ENCODE measurements at regions of chr18 and their contacts with region 1.

Region 1: DNA sequence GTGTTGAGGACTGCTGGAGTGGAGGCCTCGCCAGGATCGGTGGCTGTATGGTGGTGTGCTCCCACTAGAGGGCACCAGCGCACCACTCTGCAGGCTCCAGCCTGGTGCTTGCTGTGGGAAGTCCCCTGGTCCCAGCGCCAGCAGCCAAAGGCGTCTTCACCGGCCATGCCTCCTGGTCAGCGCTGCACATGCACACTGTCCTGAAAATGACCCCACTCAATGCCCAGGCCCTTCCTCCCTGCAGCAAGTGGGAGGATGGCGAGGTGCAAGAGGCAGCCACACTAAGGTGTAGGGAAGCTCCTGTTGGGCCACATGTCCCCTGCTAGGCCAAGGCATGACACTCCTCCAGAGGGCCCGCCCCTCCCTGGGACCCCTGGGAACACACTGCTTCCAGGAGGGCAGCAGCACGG is 136.5 kb downstream of the CTIF start:
- DNase-seq: peak; percentile 51
- ATAC-seq: peak; percentile 98
- H3K4me3 ChIP-seq: no peak overlapping the region
- H3K27ac ChIP-seq: no peak overlapping the region
- H3K4me1 ChIP-seq: peaks cover 8% of the 10 kb centered on the region
- H3K27me3 ChIP-seq: no peaks in the 10 kb centered on the region
- CTCF ChIP-seq: peak; percentile 91 to 99 (median 97); a peak in 5 of 6 replicates
- EP300 ChIP-seq: 0 out of 4 replicates have a peak, but pooled peaks of 1 of the 2 experiments have one; percentile 30
- POLR2A ChIP-seq: no peak
- RAD21 ChIP-seq: peak; percentile 86

Region 2: GRCh38 chr18:48851599-48851960 is 176.2 kb after region 1 on chr18:
- CTCF ChIA-PET with region 1: no interaction called
- POLR2A ChIA-PET with region 1: no interaction called
- RAD21 ChIA-PET with region 1: no interaction called
- SMC1A ChIA-PET with region 1: no interaction called
- in situ Hi-C with region 1: no loop called
- intact Hi-C with region 1: no loop called
- DNase-seq: no peak
- ATAC-seq: no peak
- H3K4me3 ChIP-seq: no peak overlapping the region
- H3K27ac ChIP-seq: no peak overlapping the region
- H3K4me1 ChIP-seq: peaks cover 2% of the 10 kb centered on the region; the same call in 1 of the 2 replicates
- H3K27me3 ChIP-seq: no peaks in the 10 kb centered on the region
- CTCF ChIP-seq: no peak
- EP300 ChIP-seq: no peak
- POLR2A ChIP-seq: no peak
- RAD21 ChIP-seq: no peak

Region 3: GRCh38 chr18:48896690-48897511 is 221.5 kb after region 1 on chr18:
- CTCF ChIA-PET with region 1: no interaction called
- POLR2A ChIA-PET with region 1: no interaction called
- RAD21 ChIA-PET with region 1: no interaction called
- SMC1A ChIA-PET with region 1: no interaction called
- in situ Hi-C with region 1: no loop called
- intact Hi-C with region 1: no loop called
- DNase-seq: peak; percentile 19
- ATAC-seq: peak; percentile 92
- H3K4me3 ChIP-seq: no peak overlapping the region
- H3K27ac ChIP-seq: peak overlapping the region; percentile 34; the same call in 1 of the 2 replicates
- H3K4me1 ChIP-seq: peaks cover 13% of the 10 kb centered on the region
- H3K27me3 ChIP-seq: no peaks in the 10 kb centered on the region
- CTCF ChIP-seq: peak in 2 of 3 experiments; percentile 14 to 25; a peak in 2 of 6 replicates
- EP300 ChIP-seq: 0 out of 4 replicates have a peak, but pooled peaks of 1 of the 2 experiments have one; percentile 6
- POLR2A ChIP-seq: no peak
- RAD21 ChIP-seq: peak; percentile 34; the same call in 1 of the 2 replicates

Region 4: GRCh38 chr18:48913201-48913600 is 237.8 kb after region 1 on chr18:
- CTCF ChIA-PET with region 1: no interaction called
- POLR2A ChIA-PET with region 1: no interaction called
- RAD21 ChIA-PET with region 1: interaction called, 3 read pairs
- SMC1A ChIA-PET with region 1: no interaction called
- in situ Hi-C with region 1: no loop called
- intact Hi-C with region 1: loop called (anchors 10 kb)
- DNase-seq: no peak
- ATAC-seq: peak; percentile 79
- H3K4me3 ChIP-seq: no peak overlapping the region
- H3K27ac ChIP-seq: no peak overlapping the region
- H3K4me1 ChIP-seq: peaks cover 10% of the 10 kb centered on the region
- H3K27me3 ChIP-seq: no peaks in the 10 kb centered on the region
- CTCF ChIP-seq: peak; percentile 38 to 51 (median 43); a peak in 5 of 6 replicates
- EP300 ChIP-seq: no peak
- POLR2A ChIP-seq: no peak
- RAD21 ChIP-seq: peak; percentile 34; the same call in 1 of the 2 replicates

Region 5: GRCh38 chr18:49041435-49042245 is 366.3 kb after region 1 on chr18:
- CTCF ChIA-PET with region 1: interaction called, 10 read pairs
- POLR2A ChIA-PET with region 1: no interaction called
- RAD21 ChIA-PET with region 1: no interaction called
- SMC1A ChIA-PET with region 1: no interaction called
- in situ Hi-C with region 1: no loop called
- intact Hi-C with region 1: loop called (anchors 5 kb)
- DNase-seq: no peak
- ATAC-seq: peak; percentile 75
- H3K4me3 ChIP-seq: no peak overlapping the region
- H3K27ac ChIP-seq: no peak overlapping the region
- H3K4me1 ChIP-seq: no peaks in the 10 kb centered on the region
- H3K27me3 ChIP-seq: no peaks in the 10 kb centered on the region
- CTCF ChIP-seq: peak; percentile 49 to 56 (median 53); a peak in 5 of 6 replicates
- EP300 ChIP-seq: no peak
- POLR2A ChIP-seq: no peak
- RAD21 ChIP-seq: peak; percentile 51

Region 6: DNA sequence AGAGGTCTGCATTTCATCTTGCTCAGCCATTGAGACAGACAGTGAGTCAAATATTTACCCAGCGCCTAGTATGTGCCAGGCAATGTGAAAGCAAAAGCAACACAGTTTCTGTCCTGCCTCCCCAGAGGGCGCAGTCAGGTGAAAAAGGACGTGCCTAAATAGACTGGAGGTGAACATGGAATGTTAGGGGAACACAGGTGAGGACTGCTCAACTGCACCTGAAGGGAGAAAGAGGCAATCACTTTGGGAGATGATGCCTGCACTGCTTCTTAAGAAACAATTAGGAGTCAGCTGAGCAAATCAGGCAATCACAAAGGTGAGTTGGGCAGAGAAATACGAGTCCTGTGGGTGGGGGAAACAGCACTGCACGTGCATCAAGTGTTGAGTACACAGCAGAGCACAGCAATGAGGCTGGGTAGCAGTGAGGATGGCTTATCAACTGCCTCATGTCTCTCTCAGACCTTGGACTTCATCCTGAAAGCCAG is 493.7 kb after region 1 on chr18:
- CTCF ChIA-PET with region 1: interaction called, 18 read pairs
- POLR2A ChIA-PET with region 1: no interaction called
- RAD21 ChIA-PET with region 1: interaction called, 3 read pairs
- SMC1A ChIA-PET with region 1: interaction called, 4 read pairs
- in situ Hi-C with region 1: no loop called
- intact Hi-C with region 1: loop called (anchors 5 kb)
- DNase-seq: peak; percentile 74
- ATAC-seq: peak; percentile 95
- H3K4me3 ChIP-seq: 0 out of 2 replicates have a peak overlapping the region, but pooled peaks have one; percentile 37
- H3K27ac ChIP-seq: peak overlapping the region; percentile 38
- H3K4me1 ChIP-seq: peaks cover 24% of the 10 kb centered on the region
- H3K27me3 ChIP-seq: no peaks in the 10 kb centered on the region
- CTCF ChIP-seq: peak; percentile 20 to 30 (median 27); a peak in 4 of 6 replicates
- EP300 ChIP-seq: no peak
- POLR2A ChIP-seq: no peak
- RAD21 ChIP-seq: 0 out of 2 replicates have a peak, but pooled peaks have one; percentile 4

Region 7: DNA sequence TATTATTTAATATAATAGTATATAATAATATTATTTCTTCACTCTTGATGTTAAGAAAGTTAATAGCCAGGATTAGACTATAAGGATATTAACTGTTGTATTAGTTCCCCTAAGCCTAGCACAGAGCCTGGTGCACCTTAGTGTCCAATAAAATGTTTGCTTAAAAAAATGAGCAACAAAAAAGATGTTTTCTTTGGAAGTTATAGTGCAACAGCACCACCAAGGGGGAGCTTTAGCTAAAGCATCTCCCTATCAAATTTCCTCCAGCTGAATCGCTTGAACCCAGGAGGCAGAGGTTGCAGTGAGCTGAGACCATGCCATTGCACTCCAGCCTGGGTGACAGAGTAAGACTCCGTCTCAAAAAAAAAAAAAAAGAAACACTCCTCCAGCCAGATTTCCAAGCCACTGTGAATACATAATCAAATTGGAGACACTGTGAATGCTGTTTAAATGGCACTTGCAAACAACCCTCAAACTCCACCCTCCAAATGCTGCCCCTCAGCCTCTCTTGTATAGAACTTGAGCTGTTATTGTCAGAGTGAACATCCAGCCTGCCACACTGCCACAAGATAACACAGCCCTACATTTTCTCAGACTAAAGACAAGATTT is 563.2 kb after region 1 on chr18:
- CTCF ChIA-PET with region 1: interaction called, 47 read pairs
- POLR2A ChIA-PET with region 1: no interaction called
- RAD21 ChIA-PET with region 1: interaction called, 5 read pairs
- SMC1A ChIA-PET with region 1: interaction called, 8 read pairs
- in situ Hi-C with region 1: no loop called
- intact Hi-C with region 1: loop called (anchors 2 kb)
- DNase-seq: no peak
- ATAC-seq: no peak
- H3K4me3 ChIP-seq: no peak overlapping the region
- H3K27ac ChIP-seq: no peak overlapping the region
- H3K4me1 ChIP-seq: no peaks in the 10 kb centered on the region
- H3K27me3 ChIP-seq: no peaks in the 10 kb centered on the region
- CTCF ChIP-seq: peak; percentile 18 to 50 (median 45); a peak in 4 of 6 replicates
- EP300 ChIP-seq: no peak
- POLR2A ChIP-seq: no peak
- RAD21 ChIP-seq: peak; percentile 59

Region 8: GRCh38 chr18:49412679-49413078 is 737.3 kb after region 1 on chr18:
- CTCF ChIA-PET with region 1: interaction called, 9 read pairs
- POLR2A ChIA-PET with region 1: no interaction called
- RAD21 ChIA-PET with region 1: interaction called, 4 read pairs
- SMC1A ChIA-PET with region 1: no interaction called
- in situ Hi-C with region 1: loop called (anchors 25 kb)
- intact Hi-C with region 1: loop called (anchors 2 kb)
- DNase-seq: no peak
- ATAC-seq: no peak
- H3K4me3 ChIP-seq: no peak overlapping the region
- H3K27ac ChIP-seq: no peak overlapping the region
- H3K4me1 ChIP-seq: no peaks in the 10 kb centered on the region
- H3K27me3 ChIP-seq: no peaks in the 10 kb centered on the region
- CTCF ChIP-seq: no peak
- EP300 ChIP-seq: no peak
- POLR2A ChIP-seq: no peak
- RAD21 ChIP-seq: no peak

Region 9: GRCh38 chr18:49858309-49859020 is 1183.1 kb after region 1 on chr18:
- CTCF ChIA-PET with region 1: interaction called, 6 read pairs
- POLR2A ChIA-PET with region 1: no interaction called
- RAD21 ChIA-PET with region 1: no interaction called
- SMC1A ChIA-PET with region 1: interaction called, 3 read pairs
- in situ Hi-C with region 1: loop called (anchors 5 kb)
- intact Hi-C with region 1: loop called (anchors 5 kb)
- DNase-seq: no peak
- ATAC-seq: peak; percentile 70
- H3K4me3 ChIP-seq: no peak overlapping the region
- H3K27ac ChIP-seq: no peak overlapping the region
- H3K4me1 ChIP-seq: no peaks in the 10 kb centered on the region
- H3K27me3 ChIP-seq: no peaks in the 10 kb centered on the region; a peak in 1 of 4 replicates
- CTCF ChIP-seq: peak; percentile 80 to 90 (median 84)
- EP300 ChIP-seq: no peak
- POLR2A ChIP-seq: no peak
- RAD21 ChIP-seq: peak; percentile 99

Measured in GM12878 (cell line).